Ovary (tissue), 10 donors: ENCODE measurements at regions of chr7 and their contacts with region 1.

Region 1: GRCh38 chr7:49264530-49264929 is 340.2 kb downstream of the CDC14C start:
- DNase-seq: no peak
- H3K4me3 ChIP-seq: no peak overlapping the region
- H3K27ac ChIP-seq: no peak overlapping the region
- H3K4me1 ChIP-seq: no peaks in the 10 kb centered on the region
- H3K27me3 ChIP-seq: no peaks in the 10 kb centered on the region
- CTCF ChIP-seq: no peak
- EP300 ChIP-seq: no peak
- POLR2A ChIP-seq: no peak

Region 2: DNA sequence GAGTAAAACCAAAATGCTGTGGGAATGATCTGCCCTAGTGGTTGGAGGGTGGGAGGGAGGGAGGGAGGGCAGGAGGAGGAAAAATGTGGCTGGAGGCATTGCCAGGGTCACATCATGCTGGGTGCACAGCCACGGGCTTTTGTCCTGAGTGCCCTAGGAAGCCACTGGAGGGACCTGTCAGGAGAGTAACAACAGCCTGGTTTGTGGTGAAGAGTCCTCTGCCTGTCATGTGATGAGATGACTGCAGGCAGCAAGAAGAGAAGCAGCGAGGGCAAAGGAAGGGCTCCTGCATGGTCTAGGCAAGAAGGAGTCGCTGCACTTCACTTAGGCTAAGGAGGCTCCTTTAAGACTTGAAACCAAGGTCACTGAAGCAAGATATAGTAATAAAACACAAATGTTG is 1381.9 kb before region 1 on chr7:
- intact Hi-C with region 1: loop called in 1 of 4 experiments (anchors 5 kb)
- DNase-seq: no peak
- H3K4me3 ChIP-seq: no peak overlapping the region
- H3K27ac ChIP-seq: no peak overlapping the region
- H3K4me1 ChIP-seq: peaks cover 3% of the 10 kb centered on the region
- H3K27me3 ChIP-seq: no peaks in the 10 kb centered on the region
- CTCF ChIP-seq: no peak
- EP300 ChIP-seq: no peak
- POLR2A ChIP-seq: no peak

Region 3: GRCh38 chr7:48528646-48529045 is 735.9 kb before region 1 on chr7:
- intact Hi-C with region 1: no loop called
- DNase-seq: no peak
- H3K4me3 ChIP-seq: no peak overlapping the region
- H3K27ac ChIP-seq: no peak overlapping the region
- H3K4me1 ChIP-seq: no peaks in the 10 kb centered on the region
- H3K27me3 ChIP-seq: no peaks in the 10 kb centered on the region
- CTCF ChIP-seq: no peak
- EP300 ChIP-seq: no peak
- POLR2A ChIP-seq: no peak